Psoas muscle (tissue), 8 donors: ENCODE measurements at regions of chr9 and their contacts with region 1.

Region 1: DNA sequence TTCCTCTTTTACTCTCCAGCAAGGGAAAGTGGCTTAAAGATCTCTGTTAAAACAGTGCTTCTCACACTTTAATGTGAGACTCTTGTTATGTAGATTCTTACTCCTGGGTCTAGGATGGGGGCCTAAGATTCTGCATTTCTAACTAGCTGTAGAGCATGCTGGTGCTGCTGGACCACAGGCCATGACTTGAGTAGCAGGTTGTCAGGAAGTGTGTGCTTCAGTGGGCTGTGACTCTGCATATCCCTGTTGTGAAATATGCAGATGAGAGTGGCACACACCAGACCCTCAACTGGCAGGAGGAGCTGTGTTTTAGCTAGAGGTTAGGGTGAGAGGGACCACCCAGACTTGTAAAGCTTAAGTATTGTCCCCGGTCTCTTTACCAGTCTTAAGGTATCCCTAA is 191.1 kb upstream of the DMRT1 start:
- DNase-seq: no peak
- ATAC-seq: no peak
- H3K4me3 ChIP-seq: no peak overlapping the region
- H3K27ac ChIP-seq: no peak overlapping the region
- H3K4me1 ChIP-seq: peaks cover 40% of the 10 kb centered on the region
- H3K27me3 ChIP-seq: no peaks in the 10 kb centered on the region
- CTCF ChIP-seq: no peak

Region 2: GRCh38 chr9:684941-685340 is 34.6 kb after region 1 on chr9:
- intact Hi-C with region 1: loop called in 1 of 2 experiments (anchors 5 kb)
- DNase-seq: no peak
- ATAC-seq: no peak
- H3K4me3 ChIP-seq: no peak overlapping the region
- H3K27ac ChIP-seq: peak overlapping the region; percentile 77
- H3K4me1 ChIP-seq: peaks cover 37% of the 10 kb centered on the region
- H3K27me3 ChIP-seq: no peaks in the 10 kb centered on the region
- CTCF ChIP-seq: no peak

Region 3: GRCh38 chr9:751137-752051 is 101.0 kb after region 1 on chr9:
- intact Hi-C with region 1: loop called in 1 of 2 experiments (anchors 10 kb)
- DNase-seq: no peak
- ATAC-seq: peak; percentile 48 to 70 (median 61)
- H3K4me3 ChIP-seq: no peak overlapping the region
- H3K27ac ChIP-seq: peak overlapping the region; percentile 85
- H3K4me1 ChIP-seq: peaks cover 43% of the 10 kb centered on the region
- H3K27me3 ChIP-seq: no peaks in the 10 kb centered on the region
- CTCF ChIP-seq: no peak

Region 4: GRCh38 chr9:875119-875962 is 225.0 kb after region 1 on chr9:
- intact Hi-C with region 1: no loop called
- DNase-seq: no peak
- ATAC-seq: no peak
- H3K4me3 ChIP-seq: no peak overlapping the region
- H3K27ac ChIP-seq: no peak overlapping the region
- H3K4me1 ChIP-seq: no peaks in the 10 kb centered on the region
- H3K27me3 ChIP-seq: peaks cover 0 to 2% (median 0%) of the 10 kb centered on the region in 3 donors
- CTCF ChIP-seq: no peak